Activated CD4-positive, alpha-beta T cell treated with anti-CD3 and anti-CD28 coated beads, Interleukin-2, amount 10 ng/mL, durations not matched to agents 7 days and 5 days (primary cell): ENCODE measurements at regions of chr11 and their contacts with region 1.

Region 1: GRCh38 chr11:73661035-73661628 is 14.8 kb downstream of the PLEKHB1 start:
- DNase-seq: peak; percentile 84
- H3K4me3 Mint-ChIP-seq: peak overlapping the region; percentile 53
- H3K27ac Mint-ChIP-seq: no peak overlapping the region
- H3K4me1 Mint-ChIP-seq: peaks cover 12% of the 10 kb centered on the region
- H3K27me3 Mint-ChIP-seq: no peaks in the 10 kb centered on the region

Region 2: DNA sequence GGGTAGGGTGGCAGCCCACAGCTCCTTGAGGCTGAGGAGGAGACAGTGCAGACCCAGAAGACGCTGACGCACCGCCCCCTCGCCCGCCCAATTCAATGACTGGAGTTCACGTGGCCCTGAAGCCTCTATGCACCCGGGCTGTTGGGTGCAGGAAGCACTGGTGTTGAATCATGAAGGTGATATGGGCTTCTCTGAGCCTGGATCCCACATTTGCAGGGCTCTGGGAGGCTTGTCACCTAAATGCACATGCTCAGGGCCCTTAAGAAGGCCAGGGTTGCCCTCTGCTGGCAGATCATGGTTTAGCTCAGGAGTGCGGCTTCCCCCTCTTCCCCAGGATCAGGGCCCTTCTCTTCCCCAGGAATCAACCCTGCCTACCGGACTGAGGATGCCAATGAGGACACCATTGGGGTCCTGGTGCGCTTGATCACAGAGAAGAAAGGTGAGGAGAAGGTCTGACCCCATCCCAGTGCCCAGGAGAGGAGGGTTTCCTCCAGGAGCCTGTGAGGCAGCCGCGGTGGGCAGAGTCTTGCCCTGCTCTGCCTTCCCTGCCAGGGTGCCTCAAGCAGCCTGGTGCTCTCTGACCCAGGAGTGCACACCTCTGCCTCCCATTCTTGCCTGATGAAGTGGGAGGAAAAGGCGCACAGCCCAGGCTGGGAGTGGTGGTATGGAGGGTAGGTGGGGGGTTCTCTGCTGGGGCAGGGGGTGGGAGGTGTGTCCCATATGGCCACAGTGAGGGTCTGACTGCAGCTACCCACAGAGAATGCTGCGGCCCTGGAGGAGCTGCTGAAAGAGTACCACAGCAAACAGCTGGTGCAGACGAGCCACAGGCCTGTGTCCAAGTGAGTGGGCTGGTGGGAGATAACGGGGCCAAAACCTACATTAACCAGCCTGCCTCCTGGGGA is 267.4 kb before region 1 on chr11:
- CTCF ChIA-PET with region 1: no interaction called
- POLR2A ChIA-PET with region 1: no interaction called
- DNase-seq: peak; percentile 76
- H3K4me3 Mint-ChIP-seq: no peak overlapping the region
- H3K27ac Mint-ChIP-seq: peak overlapping the region; percentile 72
- H3K4me1 Mint-ChIP-seq: peaks cover 5% of the 10 kb centered on the region
- H3K27me3 Mint-ChIP-seq: no peaks in the 10 kb centered on the region

Region 3: DNA sequence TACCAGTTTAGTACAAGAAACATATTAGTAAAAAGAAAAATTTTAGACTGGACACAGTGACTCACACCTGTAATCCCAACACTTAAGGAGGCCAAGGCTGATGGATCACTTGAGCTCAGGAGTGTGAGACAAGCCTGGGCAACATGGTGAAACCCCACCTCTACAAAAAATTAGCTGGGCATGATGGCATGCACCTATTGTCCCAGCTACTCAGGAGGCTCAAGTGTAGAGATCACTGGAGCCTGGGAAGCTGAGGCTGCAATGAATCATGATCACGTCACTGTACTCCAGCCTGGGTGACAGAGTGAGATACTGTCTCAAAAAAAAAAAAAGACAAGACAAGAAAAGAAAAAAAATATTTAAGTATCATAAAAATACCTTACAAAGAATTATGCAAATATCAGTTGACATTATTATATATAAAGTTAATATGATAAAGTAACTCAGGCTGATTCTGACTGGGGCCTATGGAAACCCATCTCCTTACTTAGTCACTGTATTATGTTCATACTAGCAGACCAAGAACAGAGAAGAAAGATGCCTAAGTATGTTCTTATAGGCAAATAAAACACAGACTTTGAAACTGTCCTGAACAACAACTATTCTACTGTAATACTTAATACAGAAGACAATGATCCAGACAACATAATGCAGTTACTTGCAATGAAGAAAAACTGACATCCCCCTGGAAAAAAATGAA is 90.6 kb before region 1 on chr11:
- CTCF ChIA-PET with region 1: no interaction called
- POLR2A ChIA-PET with region 1: no interaction called
- DNase-seq: no peak
- H3K4me3 Mint-ChIP-seq: no peak overlapping the region
- H3K27ac Mint-ChIP-seq: no peak overlapping the region
- H3K4me1 Mint-ChIP-seq: no peaks in the 10 kb centered on the region
- H3K27me3 Mint-ChIP-seq: no peaks in the 10 kb centered on the region

Region 4: GRCh38 chr11:73625696-73626318 is 35.3 kb before region 1 on chr11:
- CTCF ChIA-PET with region 1: interaction called, 39 read pairs
- POLR2A ChIA-PET with region 1: no interaction called
- DNase-seq: peak; percentile 71
- H3K4me3 Mint-ChIP-seq: no peak overlapping the region
- H3K27ac Mint-ChIP-seq: no peak overlapping the region
- H3K4me1 Mint-ChIP-seq: peaks cover 3% of the 10 kb centered on the region
- H3K27me3 Mint-ChIP-seq: peaks cover 20% of the 10 kb centered on the region

Region 5: DNA sequence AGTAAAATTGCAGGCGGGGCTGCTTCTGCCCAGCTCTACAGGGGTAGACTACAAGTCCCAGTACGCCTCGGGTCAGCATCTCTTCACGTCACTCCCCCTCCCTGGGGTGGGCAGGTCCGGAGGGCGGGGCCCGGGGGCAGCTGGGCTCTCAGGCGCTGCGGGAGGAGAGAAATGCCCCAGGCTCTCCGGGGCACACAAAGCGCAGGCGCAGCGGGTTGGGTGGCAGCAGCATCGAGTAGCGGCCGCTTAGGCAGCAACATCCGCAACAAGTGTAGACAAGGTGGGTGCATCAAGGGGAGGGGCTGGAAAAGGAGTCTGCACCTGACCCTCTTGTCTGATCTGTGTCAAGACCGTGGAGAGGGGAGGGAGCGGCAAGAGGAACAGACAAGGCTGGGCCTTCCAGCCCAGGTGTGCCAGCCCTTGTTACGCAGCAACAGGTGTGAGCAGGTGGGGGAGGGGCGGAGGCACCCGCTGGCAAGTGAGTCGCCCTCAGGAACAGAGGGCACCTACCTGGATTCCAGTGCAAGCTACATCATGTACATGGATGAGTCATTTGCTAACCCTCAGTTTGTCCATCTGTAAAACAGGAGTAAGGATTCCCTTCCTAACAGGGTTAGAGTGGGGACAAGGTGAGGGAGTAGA is 13.6 kb before region 1 on chr11:
- CTCF ChIA-PET with region 1: interaction called, 26 read pairs
- POLR2A ChIA-PET with region 1: no interaction called
- DNase-seq: peak; percentile 92
- H3K4me3 Mint-ChIP-seq: peak overlapping the region; percentile 73
- H3K27ac Mint-ChIP-seq: peak overlapping the region; percentile 60
- H3K4me1 Mint-ChIP-seq: peaks cover 20% of the 10 kb centered on the region
- H3K27me3 Mint-ChIP-seq: no peaks in the 10 kb centered on the region

Region 6: DNA sequence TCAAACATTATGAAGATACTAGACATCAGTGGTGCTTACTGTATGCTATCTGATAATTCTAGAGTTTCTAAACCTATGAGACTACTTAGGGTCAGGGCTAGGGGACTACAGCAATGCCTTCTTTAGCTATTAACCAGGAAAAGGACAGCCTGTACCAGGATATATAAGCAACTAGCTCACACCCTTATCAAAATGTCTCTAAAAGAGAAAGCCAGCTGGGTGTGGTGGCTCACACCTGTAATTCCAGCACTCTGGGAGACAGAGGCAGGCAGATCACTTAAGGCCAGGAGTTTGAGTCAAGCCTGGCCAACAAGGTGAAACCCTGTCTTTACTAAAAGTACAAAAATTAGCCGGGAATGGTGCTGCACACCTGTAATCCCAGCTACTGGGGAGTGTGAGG is 43.9 kb after region 1 on chr11:
- CTCF ChIA-PET with region 1: no interaction called
- POLR2A ChIA-PET with region 1: no interaction called
- DNase-seq: no peak
- H3K4me3 Mint-ChIP-seq: no peak overlapping the region
- H3K27ac Mint-ChIP-seq: no peak overlapping the region
- H3K4me1 Mint-ChIP-seq: no peaks in the 10 kb centered on the region
- H3K27me3 Mint-ChIP-seq: no peaks in the 10 kb centered on the region